ENCODE measurements at regions of chr15 and their contacts with region 1.

Region 1: DNA sequence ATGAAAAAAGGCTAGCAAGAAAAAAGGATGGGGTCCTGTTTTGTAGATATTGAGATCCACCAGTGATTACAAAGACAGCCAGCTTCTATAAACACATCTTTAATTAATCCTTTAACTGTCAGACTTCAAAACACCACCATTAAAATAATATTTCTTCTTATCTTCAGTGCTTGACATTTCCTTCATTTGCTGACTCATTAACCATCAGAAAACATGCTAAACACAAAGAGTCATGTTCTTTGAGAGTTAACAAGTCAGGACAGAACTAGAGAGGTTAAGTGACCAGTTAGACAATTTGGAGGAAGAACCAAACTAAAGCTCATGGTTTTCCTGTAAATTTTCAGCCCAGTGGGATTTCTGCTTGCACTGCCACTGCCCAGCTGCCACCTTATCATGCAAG is 111.4 kb downstream of the MEIS2 start:
- DNase-seq: no peak
- H3K4me3 ChIP-seq: no peak overlapping the region
- H3K27ac ChIP-seq: no peak overlapping the region
- H3K4me1 ChIP-seq: peaks cover 1% of the 10 kb centered on the region
- H3K27me3 ChIP-seq: no peaks in the 10 kb centered on the region
- CTCF ChIP-seq: no peak
- EP300 ChIP-seq: no peak
- POLR2A ChIP-seq: no peak

Region 2: GRCh38 chr15:36951731-36952247 is 37.2 kb before region 1 on chr15:
- intact Hi-C with region 1: no loop called
- DNase-seq: no peak
- H3K4me3 ChIP-seq: no peak overlapping the region
- H3K27ac ChIP-seq: no peak overlapping the region
- H3K4me1 ChIP-seq: no peaks in the 10 kb centered on the region
- H3K27me3 ChIP-seq: no peaks in the 10 kb centered on the region
- CTCF ChIP-seq: no peak
- EP300 ChIP-seq: no peak
- POLR2A ChIP-seq: no peak

Region 3: DNA sequence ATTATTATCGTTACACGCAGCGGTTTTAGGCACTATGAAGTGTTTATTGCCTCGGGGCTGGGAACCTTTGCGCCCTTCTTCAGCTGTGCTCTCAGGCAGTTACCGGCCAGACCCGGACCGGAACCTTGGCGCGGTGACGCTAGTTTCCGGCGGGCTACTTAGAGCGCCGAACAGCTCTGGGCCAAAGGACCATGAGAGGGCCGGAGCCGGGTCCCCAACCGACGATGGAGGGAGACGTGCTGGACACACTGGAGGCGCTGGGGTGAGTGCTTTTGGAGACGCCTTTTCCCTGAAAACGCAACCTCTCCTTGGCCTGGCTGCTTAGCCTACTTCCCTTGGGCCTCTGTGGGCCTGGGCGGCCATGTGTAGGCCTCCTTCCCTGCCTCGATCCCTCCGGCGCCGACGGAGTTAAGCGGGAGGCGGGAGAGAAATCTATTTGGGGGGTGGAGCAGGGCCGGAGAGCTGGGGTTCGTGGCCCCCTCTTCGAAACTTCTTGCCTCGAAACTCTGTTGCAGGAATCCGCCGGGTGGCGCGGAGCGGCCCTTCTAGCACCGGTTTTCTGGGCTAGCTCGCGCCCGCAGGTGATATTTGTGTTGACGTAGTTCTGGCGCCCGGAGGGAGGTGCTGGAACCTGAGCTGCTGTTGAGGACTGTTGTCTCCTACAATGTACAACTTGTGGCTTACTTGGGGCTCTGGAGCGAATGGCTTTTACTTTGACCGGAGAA is 1465.2 kb after region 1 on chr15 and contains the start of gene FAM98B:
- intact Hi-C with region 1: loop called in 1 of 4 experiments (anchors 5 kb)
- DNase-seq: peak; percentile 81 to 93 (median 85)
- H3K4me3 ChIP-seq: peak within 1 kb of the TSS; percentile 87
- H3K27ac ChIP-seq: peak within 1 kb of the TSS; percentile 83 to 94
- H3K4me1 ChIP-seq: peaks cover 3% of the 10 kb centered on the region
- H3K27me3 ChIP-seq: no peaks in the 10 kb centered on the region
- CTCF ChIP-seq: no peak
- EP300 ChIP-seq: no peak
- POLR2A ChIP-seq: peak; percentile 36
- total RNA-seq, gene FAM98B: 9.4 to 31.0 (median 19.8) TPM